T-cell (primary cell): ENCODE measurements at regions of chr15 and their contacts with region 1.

Region 1: GRCh38 chr15:59751552-59752413 is 62.7 kb upstream of the BNIP2 start:
- DNase-seq: peak in 8 of 35 experiments; percentile 6 to 80 (median 16)
- ATAC-seq: peak; percentile 93 to 100 (median 96)
- H3K4me3 ChIP-seq: no peak overlapping the region
- H3K4me3 Mint-ChIP-seq: no peak overlapping the region
- H3K27ac ChIP-seq: no peak overlapping the region
- H3K27ac Mint-ChIP-seq: no peak overlapping the region
- H3K4me1 ChIP-seq: peaks cover 3% of the 10 kb centered on the region in 2 experiments
- H3K4me1 Mint-ChIP-seq: peaks cover 8 to 11% (median 8%) of the 10 kb centered on the region in 3 donors
- H3K27me3 ChIP-seq: peaks cover 0 to 2% of the 10 kb centered on the region in 2 experiments
- H3K27me3 Mint-ChIP-seq: peaks cover 3 to 4% of the 10 kb centered on the region in 2 donors

Region 2: GRCh38 chr15:59420986-59421618 is 330.7 kb before region 1 on chr15:
- CTCF ChIA-PET with region 1: no interaction called
- POLR2A ChIA-PET with region 1: no interaction called
- DNase-seq: no peak
- ATAC-seq: no peak
- H3K4me3 ChIP-seq: no peak overlapping the region
- H3K4me3 Mint-ChIP-seq: no peak overlapping the region
- H3K27ac ChIP-seq: no peak overlapping the region
- H3K27ac Mint-ChIP-seq: no peak overlapping the region
- H3K4me1 ChIP-seq: peaks cover 0 to 5% of the 10 kb centered on the region in 2 experiments
- H3K4me1 Mint-ChIP-seq: peaks cover 0 to 10% (median 6%) of the 10 kb centered on the region in 3 donors
- H3K27me3 ChIP-seq: peaks cover 4 to 6% of the 10 kb centered on the region in 2 experiments
- H3K27me3 Mint-ChIP-seq: peaks cover 20 to 24% of the 10 kb centered on the region in 2 donors

Region 3: DNA sequence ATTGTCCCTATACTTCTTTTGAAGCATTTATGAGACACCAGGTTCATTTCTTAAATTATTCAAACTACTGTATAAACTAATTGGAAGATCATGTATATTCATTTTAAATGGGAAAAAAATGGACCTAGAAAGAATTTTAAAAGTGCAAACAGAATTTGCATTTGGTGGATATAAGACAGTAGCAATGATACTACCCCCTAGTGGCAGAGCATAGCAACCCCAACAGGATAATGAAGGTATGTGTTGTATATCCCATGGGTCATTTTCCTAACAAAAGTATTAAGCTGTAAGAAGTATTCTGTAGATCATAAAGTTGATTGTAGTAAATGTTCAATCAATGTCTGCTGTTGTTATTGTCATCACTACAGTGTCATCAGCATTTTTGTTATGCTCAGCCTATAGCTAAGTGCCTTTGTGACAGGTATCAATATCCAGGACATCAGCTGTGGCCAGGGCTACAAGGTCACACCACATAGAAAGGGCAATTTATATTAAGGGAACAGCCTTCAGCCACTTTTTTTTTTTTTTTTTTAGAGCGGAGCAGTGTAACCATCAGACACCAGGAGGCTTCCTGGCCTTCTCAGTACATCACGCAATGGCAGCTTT is 428.1 kb after region 1 on chr15:
- CTCF ChIA-PET with region 1: interaction called, 7 to 10 read pairs
- POLR2A ChIA-PET with region 1: no interaction called
- DNase-seq: peak in 24 of 35 experiments; percentile 1 to 72 (median 14)
- ATAC-seq: peak in 2 of 4 experiments; percentile 58 to 59
- H3K4me3 ChIP-seq: no peak overlapping the region
- H3K4me3 Mint-ChIP-seq: no peak overlapping the region
- H3K27ac ChIP-seq: no peak overlapping the region
- H3K27ac Mint-ChIP-seq: no peak overlapping the region
- H3K4me1 ChIP-seq: no peaks in the 10 kb centered on the region
- H3K4me1 Mint-ChIP-seq: no peaks in the 10 kb centered on the region
- H3K27me3 ChIP-seq: peaks cover 0 to 5% of the 10 kb centered on the region in 2 experiments
- H3K27me3 Mint-ChIP-seq: peaks cover 14 to 22% of the 10 kb centered on the region in 2 donors